IMR-90 (cell line): ENCODE measurements at regions of chr6 and their contacts with region 1.

Region 1: DNA sequence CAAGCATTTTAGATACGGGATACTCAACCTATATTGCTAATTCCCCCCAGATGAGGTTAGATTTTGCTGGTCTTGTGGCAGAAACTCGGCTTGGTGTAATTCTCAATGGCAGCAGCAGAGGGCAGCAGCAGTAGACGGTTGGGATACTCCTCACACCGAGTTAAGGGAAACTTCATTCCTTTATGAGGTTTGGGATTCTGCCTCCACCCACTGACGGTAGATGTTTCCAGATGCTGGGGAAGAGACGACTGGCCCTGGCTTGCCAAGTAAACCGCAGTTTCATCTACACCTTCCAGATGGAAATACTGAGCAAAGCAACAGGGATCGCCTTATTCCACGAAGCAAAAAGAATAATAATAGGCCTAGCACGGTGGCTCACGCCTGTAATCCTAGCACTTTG is 8.2 kb upstream of the TBC1D7 start:
- DNase-seq: peak; percentile 84
- ATAC-seq: peak; percentile 98
- H3K4me3 ChIP-seq: no peak overlapping the region
- H3K27ac ChIP-seq: no peak overlapping the region
- H3K4me1 ChIP-seq: no peaks in the 10 kb centered on the region
- H3K27me3 ChIP-seq: no peaks in the 10 kb centered on the region
- CTCF ChIP-seq: peak; percentile 93
- POLR2A ChIP-seq: 0 out of 2 replicates have a peak, but pooled peaks have one; percentile 41
- RAD21 ChIP-seq: peak; percentile 98

Region 2: DNA sequence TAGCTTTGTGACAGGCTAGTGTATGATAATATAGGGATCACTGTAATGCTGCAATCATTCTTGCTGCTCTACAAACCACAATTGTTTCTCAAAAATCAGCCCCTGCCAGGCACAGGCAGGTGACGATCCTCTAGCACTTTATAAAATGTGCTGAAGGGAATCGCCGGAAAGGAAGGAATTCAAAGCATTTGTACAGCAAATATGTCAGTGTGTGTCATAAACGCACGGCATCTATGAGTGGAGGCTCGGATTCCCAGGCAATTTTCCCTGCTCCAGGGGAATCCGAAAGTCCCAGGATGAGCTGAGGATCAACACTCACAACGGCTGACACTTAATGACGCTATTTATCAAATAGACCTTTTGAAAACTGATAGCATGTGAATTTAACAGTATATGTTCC is 618.5 kb before region 1 on chr6:
- CTCF ChIA-PET with region 1: no interaction called
- POLR2A ChIA-PET with region 1: no interaction called
- dilution Hi-C with region 1: no loop called
- in situ Hi-C with region 1: no loop called
- intact Hi-C with region 1: no loop called
- DNase-seq: peak; percentile 0
- ATAC-seq: no peak
- H3K4me3 ChIP-seq: no peak overlapping the region
- H3K27ac ChIP-seq: no peak overlapping the region
- H3K4me1 ChIP-seq: no peaks in the 10 kb centered on the region
- H3K27me3 ChIP-seq: no peaks in the 10 kb centered on the region
- CTCF ChIP-seq: no peak
- POLR2A ChIP-seq: no peak
- RAD21 ChIP-seq: no peak

Region 3: GRCh38 chr6:12804952-12805645 is 531.5 kb before region 1 on chr6:
- CTCF ChIA-PET with region 1: no interaction called
- POLR2A ChIA-PET with region 1: no interaction called
- dilution Hi-C with region 1: no loop called
- in situ Hi-C with region 1: no loop called
- intact Hi-C with region 1: no loop called
- DNase-seq: no peak
- ATAC-seq: no peak
- H3K4me3 ChIP-seq: no peak overlapping the region
- H3K27ac ChIP-seq: no peak overlapping the region
- H3K4me1 ChIP-seq: no peaks in the 10 kb centered on the region
- H3K27me3 ChIP-seq: no peaks in the 10 kb centered on the region
- CTCF ChIP-seq: no peak
- POLR2A ChIP-seq: no peak
- RAD21 ChIP-seq: no peak

Region 4: GRCh38 chr6:13368731-13369115 is 32.2 kb after region 1 on chr6:
- CTCF ChIA-PET with region 1: no interaction called
- POLR2A ChIA-PET with region 1: no interaction called
- dilution Hi-C with region 1: no loop called
- in situ Hi-C with region 1: no loop called
- intact Hi-C with region 1: loop called (anchors 1 kb)
- DNase-seq: peak; percentile 17
- ATAC-seq: no peak
- H3K4me3 ChIP-seq: no peak overlapping the region
- H3K27ac ChIP-seq: no peak overlapping the region
- H3K4me1 ChIP-seq: peaks cover 4% of the 10 kb centered on the region; the same call in 1 of the 2 replicates
- H3K27me3 ChIP-seq: no peaks in the 10 kb centered on the region
- CTCF ChIP-seq: no peak
- POLR2A ChIP-seq: no peak
- RAD21 ChIP-seq: no peak

Region 5: DNA sequence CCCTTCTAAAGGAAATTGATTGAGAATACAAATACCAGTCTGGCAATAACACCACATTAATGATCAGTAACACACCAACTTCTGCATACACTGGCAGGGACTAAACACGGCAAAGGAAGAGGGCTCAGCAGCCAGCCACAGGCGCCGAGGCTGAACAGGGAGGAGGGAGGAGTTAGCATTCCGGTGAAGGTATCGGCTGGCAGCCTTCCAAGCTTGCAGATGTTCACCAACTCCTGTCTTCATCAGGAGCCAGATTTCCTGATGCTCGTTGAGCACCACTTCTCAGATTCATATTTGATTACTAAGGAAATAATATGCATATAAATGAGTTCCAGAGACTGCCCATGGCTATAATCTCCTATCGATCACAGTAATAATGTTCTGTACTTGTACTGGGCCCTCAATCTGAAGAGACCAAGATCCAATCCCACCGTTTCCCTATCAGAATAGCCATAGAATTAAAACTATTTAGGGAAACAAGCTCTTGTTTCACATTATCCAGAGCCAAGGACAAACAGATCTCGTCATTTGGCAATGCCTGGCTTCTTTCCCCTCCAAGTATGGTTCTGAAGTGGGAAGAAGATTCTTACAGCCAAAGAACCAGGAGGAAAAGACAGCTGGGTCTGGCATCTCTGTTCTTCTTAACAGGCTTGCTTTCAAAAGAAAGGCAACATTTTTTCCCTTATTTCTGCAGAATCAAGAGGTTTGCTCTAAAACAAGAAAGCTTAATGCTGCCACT is 108.6 kb after region 1 on chr6:
- CTCF ChIA-PET with region 1: no interaction called
- POLR2A ChIA-PET with region 1: no interaction called
- dilution Hi-C with region 1: no loop called
- in situ Hi-C with region 1: no loop called
- intact Hi-C with region 1: no loop called
- DNase-seq: peak; percentile 64
- ATAC-seq: peak; percentile 38
- H3K4me3 ChIP-seq: no peak overlapping the region
- H3K27ac ChIP-seq: peak overlapping the region; percentile 48; the same call in 1 of the 2 replicates
- H3K4me1 ChIP-seq: peaks cover 8% of the 10 kb centered on the region
- H3K27me3 ChIP-seq: no peaks in the 10 kb centered on the region
- CTCF ChIP-seq: no peak
- POLR2A ChIP-seq: no peak
- RAD21 ChIP-seq: no peak

Region 6: GRCh38 chr6:13487122-13488014 is 150.8 kb after region 1 on chr6 and contains the start of gene GFOD1:
- CTCF ChIA-PET with region 1: no interaction called
- POLR2A ChIA-PET with region 1: no interaction called
- dilution Hi-C with region 1: no loop called
- in situ Hi-C with region 1: no loop called
- intact Hi-C with region 1: loop called (anchors 1 kb)
- DNase-seq: peak; percentile 78
- ATAC-seq: peak; percentile 94
- H3K4me3 ChIP-seq: peak within 1 kb of the TSS; percentile 70
- H3K27ac ChIP-seq: peak within 1 kb of the TSS; percentile 63
- H3K4me1 ChIP-seq: peaks cover 5% of the 10 kb centered on the region; the same call in 1 of the 2 replicates
- H3K27me3 ChIP-seq: no peaks in the 10 kb centered on the region
- CTCF ChIP-seq: peak; percentile 24; the same call in 1 of the 2 replicates
- POLR2A ChIP-seq: peak; percentile 53; the same call in 1 of the 2 replicates
- RAD21 ChIP-seq: no peak; the same call in 1 of the 2 replicates
- total RNA-seq, gene GFOD1: 3.4 and 3.6 TPM in 2 replicates

Region 7: DNA sequence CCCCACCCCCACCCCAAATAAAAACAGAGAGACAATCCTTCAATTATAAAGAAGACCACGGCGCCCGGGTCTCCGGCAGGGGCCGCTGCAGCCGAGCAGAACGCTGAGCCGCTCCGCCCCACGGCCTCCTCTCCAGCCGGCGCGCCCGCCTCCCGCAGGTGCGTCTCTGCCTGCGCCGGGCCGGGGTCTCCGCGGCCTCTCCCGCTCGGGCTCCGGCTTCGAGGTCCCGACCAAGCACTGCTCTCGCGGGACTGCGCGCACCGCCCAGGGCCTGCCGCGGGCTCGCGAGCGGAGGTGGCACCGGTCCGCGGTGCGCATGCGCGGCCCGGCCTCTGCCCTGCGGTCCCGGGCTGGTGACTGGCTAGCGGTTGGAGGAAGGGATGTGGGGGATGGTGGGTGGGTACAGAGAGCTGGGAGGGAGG is 237.6 kb after region 1 on chr6:
- CTCF ChIA-PET with region 1: interaction called, 6 read pairs
- POLR2A ChIA-PET with region 1: no interaction called
- dilution Hi-C with region 1: no loop called
- in situ Hi-C with region 1: no loop called
- intact Hi-C with region 1: loop called (anchors 1 kb)
- DNase-seq: peak; percentile 90
- ATAC-seq: peak; percentile 91
- H3K4me3 ChIP-seq: peak overlapping the region; percentile 76
- H3K27ac ChIP-seq: peak overlapping the region; percentile 69; the same call in 1 of the 2 replicates
- H3K4me1 ChIP-seq: no peaks in the 10 kb centered on the region; the same call in 1 of the 2 replicates
- H3K27me3 ChIP-seq: peaks cover 6% of the 10 kb centered on the region; the same call in 1 of the 2 replicates
- CTCF ChIP-seq: peak; percentile 49
- POLR2A ChIP-seq: peak; percentile 81
- RAD21 ChIP-seq: peak; percentile 41; the same call in 1 of the 2 replicates

Region 8: GRCh38 chr6:14066782-14067406 is 730.3 kb after region 1 on chr6:
- CTCF ChIA-PET with region 1: no interaction called
- POLR2A ChIA-PET with region 1: no interaction called
- dilution Hi-C with region 1: no loop called
- in situ Hi-C with region 1: no loop called
- intact Hi-C with region 1: loop called (anchors 5 kb)
- DNase-seq: peak; percentile 80
- ATAC-seq: peak; percentile 76
- H3K4me3 ChIP-seq: no peak overlapping the region
- H3K27ac ChIP-seq: no peak overlapping the region
- H3K4me1 ChIP-seq: peaks cover 4% of the 10 kb centered on the region
- H3K27me3 ChIP-seq: 0 out of 2 replicates have a peak, but pooled peaks cover 1% of the 10 kb centered on the region
- CTCF ChIP-seq: peak; percentile 78
- POLR2A ChIP-seq: no peak
- RAD21 ChIP-seq: peak; percentile 85